A673 (cell line): ENCODE measurements at regions of chr3 and their contacts with region 1.

Region 1: DNA sequence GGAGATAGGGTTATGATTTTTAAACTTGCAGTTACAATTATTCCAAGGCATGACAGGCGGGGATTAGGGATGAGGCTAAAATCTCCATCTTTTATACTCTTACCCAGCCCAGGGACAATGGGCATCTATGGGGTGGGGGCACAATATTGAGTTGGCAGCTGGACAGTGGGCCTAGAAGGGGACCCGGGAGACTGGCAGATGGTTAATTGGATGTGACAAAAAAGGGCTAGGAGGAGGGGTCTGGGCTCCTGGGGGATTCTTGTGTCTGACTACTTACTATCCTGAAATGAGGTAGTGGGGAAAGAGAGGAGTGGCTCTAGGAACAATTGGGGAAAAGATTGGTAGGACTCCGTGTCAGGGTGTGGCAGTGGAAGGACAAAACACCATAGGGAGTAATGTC is 53.0 kb upstream of the ROPN1 start:
- DNase-seq: no peak
- H3K4me3 ChIP-seq: no peak overlapping the region
- H3K27ac ChIP-seq: no peak overlapping the region
- H3K4me1 ChIP-seq: peaks cover 3% of the 10 kb centered on the region
- H3K27me3 ChIP-seq: no peaks in the 10 kb centered on the region
- CTCF ChIP-seq: no peak

Region 2: GRCh38 chr3:123907720-123908119 is 137.2 kb before region 1 on chr3:
- CTCF ChIA-PET with region 1: no interaction called
- POLR2A ChIA-PET with region 1: no interaction called
- intact Hi-C with region 1: no loop called
- DNase-seq: no peak
- H3K4me3 ChIP-seq: no peak overlapping the region
- H3K27ac ChIP-seq: no peak overlapping the region
- H3K4me1 ChIP-seq: no peaks in the 10 kb centered on the region
- H3K27me3 ChIP-seq: no peaks in the 10 kb centered on the region
- CTCF ChIP-seq: peak; percentile 29; the same call in 1 of the 2 replicates

Region 3: GRCh38 chr3:124056846-124057245 is 11.9 kb after region 1 on chr3:
- CTCF ChIA-PET with region 1: no interaction called
- POLR2A ChIA-PET with region 1: interaction called, 10 read pairs
- intact Hi-C with region 1: no loop called
- DNase-seq: no peak
- H3K4me3 ChIP-seq: no peak overlapping the region
- H3K27ac ChIP-seq: no peak overlapping the region
- H3K4me1 ChIP-seq: no peaks in the 10 kb centered on the region
- H3K27me3 ChIP-seq: no peaks in the 10 kb centered on the region
- CTCF ChIP-seq: no peak

Region 4: DNA sequence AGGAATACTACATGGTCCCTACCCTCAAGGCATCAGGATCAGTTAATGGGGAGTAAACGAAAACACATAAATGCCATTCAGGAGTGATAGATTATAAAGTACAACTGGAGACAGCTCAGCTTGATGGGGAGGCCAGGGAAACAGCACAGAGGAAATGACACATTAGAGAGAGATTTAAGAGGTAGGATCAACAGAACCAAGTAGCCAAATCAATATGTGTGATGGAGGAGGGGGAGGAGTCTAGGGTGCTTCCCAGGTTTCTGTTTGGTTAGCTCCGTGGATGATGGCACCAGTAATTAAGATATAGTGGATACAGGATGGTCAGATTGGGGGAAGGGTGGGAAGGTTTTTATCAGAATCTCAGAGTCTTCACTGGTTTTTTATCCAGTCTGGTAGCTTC is 176.5 kb after region 1 on chr3:
- CTCF ChIA-PET with region 1: no interaction called
- POLR2A ChIA-PET with region 1: no interaction called
- intact Hi-C with region 1: no loop called
- DNase-seq: peak; percentile 3
- H3K4me3 ChIP-seq: no peak overlapping the region
- H3K27ac ChIP-seq: no peak overlapping the region
- H3K4me1 ChIP-seq: no peaks in the 10 kb centered on the region
- H3K27me3 ChIP-seq: no peaks in the 10 kb centered on the region
- CTCF ChIP-seq: no peak